ENCODE measurements at regions of chr16 and their contacts with region 1.

Region 1: DNA sequence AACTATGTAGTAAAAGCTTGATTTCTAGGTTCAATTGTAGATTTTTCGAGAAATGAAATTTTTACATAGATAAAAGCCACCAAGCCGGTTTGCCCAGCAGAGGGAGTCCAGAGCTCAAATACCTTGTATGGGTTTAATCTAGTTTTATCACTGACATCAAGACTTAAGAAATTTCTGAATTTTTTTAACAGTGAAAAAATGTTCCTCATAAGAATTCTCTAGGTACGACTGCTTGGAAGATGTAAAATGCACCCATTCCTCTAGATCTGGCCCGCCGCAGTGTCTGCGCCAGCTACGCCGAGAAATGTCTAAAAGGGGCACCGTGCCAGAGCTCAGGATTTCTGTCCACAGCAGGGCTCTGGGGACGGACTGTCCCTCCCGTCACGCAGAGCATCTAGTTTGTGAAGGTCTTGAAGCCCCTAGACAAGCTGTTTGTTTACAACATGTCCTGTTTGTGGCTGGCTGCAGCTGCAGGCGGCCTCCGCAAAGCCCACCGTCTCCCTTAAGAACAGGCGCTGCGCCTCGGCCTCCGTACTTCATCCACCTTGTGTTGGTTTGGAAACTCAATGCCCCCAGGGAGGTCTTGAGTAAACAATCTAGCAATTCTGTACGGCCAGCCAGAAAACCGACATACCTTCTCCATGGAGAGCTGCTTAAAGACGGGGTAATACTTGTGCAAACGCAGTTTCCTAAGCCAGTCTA is 24.8 kb downstream of the MAP1LC3B start:
- DNase-seq: peak in 1 of 4 experiments; percentile 27
- ATAC-seq: no peak
- H3K4me3 ChIP-seq: no peak overlapping the region
- H3K27ac ChIP-seq: no peak overlapping the region
- H3K4me1 ChIP-seq: peaks cover 0 to 4% of the 10 kb centered on the region in 2 experiments; a peak in 2 of 5 replicates
- H3K27me3 ChIP-seq: no peaks in the 10 kb centered on the region; a peak in 1 of 5 replicates
- CTCF ChIP-seq: peak; percentile 32 to 63 (median 49); a peak in 4 of 6 replicates
- EP300 ChIP-seq: no peak
- POLR2A ChIP-seq: no peak
- RAD21 ChIP-seq: peak; percentile 42 to 65; a peak in 3 of 4 replicates

Region 2: GRCh38 chr16:87393680-87394055 is 23.3 kb before region 1 on chr16:
- CTCF ChIA-PET with region 1: interaction called, 4 read pairs
- POLR2A ChIA-PET with region 1: interaction called, 10 read pairs
- in situ Hi-C with region 1: no loop called
- intact Hi-C with region 1: no loop called
- DNase-seq: no peak
- ATAC-seq: no peak
- H3K4me3 ChIP-seq: peak overlapping the region; percentile 89
- H3K27ac ChIP-seq: peak overlapping the region; percentile 84; the same call in 2 of the 3 replicates
- H3K4me1 ChIP-seq: peaks cover 22 to 23% of the 10 kb centered on the region in 2 experiments
- H3K27me3 ChIP-seq: no peaks in the 10 kb centered on the region
- CTCF ChIP-seq: no peak
- EP300 ChIP-seq: no peak
- POLR2A ChIP-seq: no peak
- RAD21 ChIP-seq: no peak

Region 3: GRCh38 chr16:87560428-87561199 is 143.6 kb after region 1 on chr16:
- CTCF ChIA-PET with region 1: no interaction called
- POLR2A ChIA-PET with region 1: no interaction called
- in situ Hi-C with region 1: no loop called
- intact Hi-C with region 1: loop called (anchors 10 kb)
- DNase-seq: peak; percentile 93 to 98 (median 98)
- ATAC-seq: peak; percentile 99
- H3K4me3 ChIP-seq: peak overlapping the region; percentile 18
- H3K27ac ChIP-seq: peak overlapping the region; percentile 40; the same call in 1 of the 3 replicates
- H3K4me1 ChIP-seq: peaks cover 4 to 33% of the 10 kb centered on the region in 2 experiments; a peak in 4 of 5 replicates
- H3K27me3 ChIP-seq: peaks cover 15 to 56% of the 10 kb centered on the region in 2 experiments
- CTCF ChIP-seq: 0 out of 6 replicates have a peak, but pooled peaks of 1 of the 3 experiments have one; percentile 6
- EP300 ChIP-seq: no peak
- POLR2A ChIP-seq: no peak
- RAD21 ChIP-seq: no peak